Esophagus squamous epithelium (tissue), 5 donors: ENCODE measurements at regions of chr17 and their contacts with region 1.

Region 1: DNA sequence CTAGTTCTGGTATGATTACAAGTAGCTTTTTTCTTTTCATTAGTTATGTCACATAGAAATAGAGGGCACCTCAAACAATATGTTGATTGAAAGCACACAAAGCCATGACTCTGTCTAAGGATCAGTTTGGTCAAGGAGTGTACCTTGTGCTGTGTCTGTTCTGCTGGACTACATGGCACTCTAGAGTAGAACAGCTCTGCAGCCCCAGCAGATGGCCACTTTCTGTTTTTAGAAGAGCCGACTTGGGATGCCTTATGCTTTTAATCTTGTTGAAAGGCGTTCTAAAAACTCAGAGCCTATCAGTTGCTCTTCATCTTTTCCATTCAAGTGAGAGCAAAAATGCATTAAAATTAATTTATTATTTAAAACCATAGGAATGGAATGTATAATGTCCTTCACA is 49.3 kb upstream of the CA10 start:
- DNase-seq: no peak
- H3K4me3 ChIP-seq: no peak overlapping the region
- H3K27ac ChIP-seq: no peak overlapping the region
- H3K4me1 ChIP-seq: no peaks in the 10 kb centered on the region
- H3K27me3 ChIP-seq: no peaks in the 10 kb centered on the region
- CTCF ChIP-seq: no peak
- POLR2A ChIP-seq: no peak

Region 2: DNA sequence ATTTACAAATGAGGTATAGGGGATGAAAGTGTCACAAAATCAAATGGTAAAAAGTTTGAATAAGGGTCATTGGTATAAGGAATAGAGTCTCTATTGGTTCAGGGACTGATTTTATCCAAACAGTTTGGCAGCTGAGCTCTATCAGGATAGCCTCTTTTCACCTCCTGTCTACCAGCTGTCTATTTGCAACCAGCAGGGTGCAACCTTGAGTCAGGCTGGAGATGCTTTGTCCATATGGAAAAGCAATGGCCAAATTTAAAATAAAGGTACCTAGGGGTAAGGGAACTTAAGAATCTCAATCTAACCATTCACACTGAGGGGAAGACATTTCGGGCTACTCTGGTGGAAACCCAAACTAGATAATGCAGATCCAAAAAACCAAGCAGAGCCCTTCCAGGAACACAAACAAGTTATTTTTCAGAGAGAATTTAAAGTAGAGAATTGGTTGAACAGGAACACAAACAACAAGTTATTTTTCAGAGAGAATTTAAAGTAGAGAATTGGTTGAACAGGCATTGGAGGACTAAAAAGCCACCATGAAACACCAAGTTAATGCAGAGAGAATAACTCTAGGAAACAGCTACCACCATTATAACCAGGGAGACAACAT is 36.7 kb before region 1 on chr17:
- intact Hi-C with region 1: loop called (anchors 5 kb)
- DNase-seq: no peak
- H3K4me3 ChIP-seq: no peak overlapping the region
- H3K27ac ChIP-seq: no peak overlapping the region
- H3K4me1 ChIP-seq: no peaks in the 10 kb centered on the region
- H3K27me3 ChIP-seq: no peaks in the 10 kb centered on the region
- CTCF ChIP-seq: peak in 2 of 6 experiments; percentile 12 to 47
- POLR2A ChIP-seq: no peak